H1 (cell line): ENCODE measurements at regions of chr5 and their contacts with region 1.

Region 1: GRCh38 chr5:36690041-36690961 is 83.9 kb downstream of the SLC1A3 start:
- DNase-seq: peak; percentile 62 to 89
- H3K4me3 ChIP-seq: peak overlapping the region; percentile 41 to 74 (median 68)
- H3K27ac ChIP-seq: no peak overlapping the region
- H3K4me1 ChIP-seq: peaks cover 0 to 1% (median 0%) of the 10 kb centered on the region in 4 experiments; a peak in 1 of 7 replicates
- H3K27me3 ChIP-seq: peaks cover 3 to 18% (median 13%) of the 10 kb centered on the region in 4 experiments; a peak in 6 of 7 replicates
- CTCF ChIP-seq: peak; percentile 82 to 98 (median 94)
- EP300 ChIP-seq: no peak
- POLR2A ChIP-seq: peak in 1 of 2 experiments; percentile 62; a peak in 2 of 3 replicates
- RAD21 ChIP-seq: peak; percentile 46 to 63

Region 2: GRCh38 chr5:36403632-36404311 is 286.5 kb before region 1 on chr5:
- CTCF ChIA-PET with region 1: interaction called, 15 read pairs
- POLR2A ChIA-PET with region 1: no interaction called
- DNase-seq: no peak
- H3K4me3 ChIP-seq: no peak overlapping the region
- H3K27ac ChIP-seq: no peak overlapping the region
- H3K4me1 ChIP-seq: no peaks in the 10 kb centered on the region; a peak in 1 of 7 replicates
- H3K27me3 ChIP-seq: no peaks in the 10 kb centered on the region
- CTCF ChIP-seq: no peak
- EP300 ChIP-seq: no peak
- POLR2A ChIP-seq: no peak
- RAD21 ChIP-seq: no peak

Region 3: GRCh38 chr5:36507332-36507952 is 182.9 kb before region 1 on chr5:
- CTCF ChIA-PET with region 1: interaction called, 33 read pairs
- POLR2A ChIA-PET with region 1: no interaction called
- DNase-seq: peak in 1 of 2 experiments; percentile 91
- H3K4me3 ChIP-seq: no peak overlapping the region
- H3K27ac ChIP-seq: no peak overlapping the region
- H3K4me1 ChIP-seq: no peaks in the 10 kb centered on the region
- H3K27me3 ChIP-seq: no peaks in the 10 kb centered on the region
- CTCF ChIP-seq: peak; percentile 68 to 81 (median 81)
- EP300 ChIP-seq: no peak
- POLR2A ChIP-seq: no peak
- RAD21 ChIP-seq: peak; percentile 75 to 82

Region 4: DNA sequence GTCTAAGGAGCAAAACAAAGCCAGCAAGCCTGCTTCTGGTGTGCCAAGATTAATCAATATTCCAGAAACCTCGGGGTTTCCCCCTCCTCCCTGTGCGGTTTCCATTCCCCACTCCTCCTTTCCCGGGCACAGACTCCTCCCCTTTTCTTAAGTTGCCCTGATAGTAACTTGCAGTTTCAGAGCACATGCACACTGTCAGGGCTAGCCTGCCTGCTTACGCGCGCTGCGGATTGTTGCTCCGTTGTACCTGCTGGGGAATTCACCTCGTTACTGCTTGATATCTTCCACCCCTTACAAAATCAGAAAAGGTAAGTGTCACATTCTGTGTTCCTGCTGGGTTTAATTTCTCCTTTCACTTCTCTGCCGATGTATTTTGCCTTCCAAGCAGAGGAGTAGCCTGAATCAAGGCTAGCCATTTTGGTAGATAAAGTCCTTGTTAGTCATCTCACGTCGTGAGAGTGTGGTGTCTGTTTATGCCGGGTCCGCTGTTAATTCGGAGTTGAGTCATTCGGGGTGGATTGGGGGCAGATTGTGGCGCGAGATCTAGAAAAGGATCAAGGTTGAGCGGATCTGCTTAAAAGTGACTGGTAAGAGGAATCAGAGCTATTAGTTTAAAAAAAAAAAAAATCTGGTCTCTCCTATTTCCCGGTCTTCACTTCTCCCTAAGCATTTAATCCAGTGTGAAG is 83.7 kb before region 1 on chr5 and contains the start of gene SLC1A3:
- CTCF ChIA-PET with region 1: interaction called, 41 read pairs
- POLR2A ChIA-PET with region 1: no interaction called
- DNase-seq: peak in 1 of 2 experiments; percentile 71
- H3K4me3 ChIP-seq: peak within 1 kb of the TSS; percentile 69 to 74 (median 70)
- H3K27ac ChIP-seq: peak within 1 kb of the TSS; percentile 47; the same call in 1 of the 2 replicates
- H3K4me1 ChIP-seq: peaks cover 5 to 8% (median 6%) of the 10 kb centered on the region in 4 experiments; a peak in 6 of 7 replicates
- H3K27me3 ChIP-seq: no peaks in the 10 kb centered on the region
- CTCF ChIP-seq: no peak
- EP300 ChIP-seq: no peak
- POLR2A ChIP-seq: peak; percentile 84 to 92
- RAD21 ChIP-seq: no peak
- total RNA-seq, gene SLC1A3: 30.6 and 35.3 TPM in 2 replicates

Region 5: GRCh38 chr5:36651761-36652685 is 38.3 kb before region 1 on chr5:
- CTCF ChIA-PET with region 1: interaction called, 10 read pairs
- POLR2A ChIA-PET with region 1: no interaction called
- DNase-seq: no peak
- H3K4me3 ChIP-seq: no peak overlapping the region
- H3K27ac ChIP-seq: no peak overlapping the region
- H3K4me1 ChIP-seq: peaks cover 0 to 14% (median 10%) of the 10 kb centered on the region in 4 experiments; a peak in 6 of 7 replicates
- H3K27me3 ChIP-seq: no peaks in the 10 kb centered on the region
- CTCF ChIP-seq: no peak
- EP300 ChIP-seq: no peak
- POLR2A ChIP-seq: no peak
- RAD21 ChIP-seq: no peak

Region 6: GRCh38 chr5:36778336-36778735 is 88.0 kb after region 1 on chr5:
- CTCF ChIA-PET with region 1: no interaction called
- POLR2A ChIA-PET with region 1: no interaction called
- DNase-seq: no peak
- H3K4me3 ChIP-seq: no peak overlapping the region
- H3K27ac ChIP-seq: no peak overlapping the region
- H3K4me1 ChIP-seq: no peaks in the 10 kb centered on the region
- H3K27me3 ChIP-seq: no peaks in the 10 kb centered on the region
- CTCF ChIP-seq: no peak
- EP300 ChIP-seq: no peak
- POLR2A ChIP-seq: no peak
- RAD21 ChIP-seq: no peak